A549 (cell line): ENCODE measurements at regions of chr9 and their contacts with region 1.

Region 1: GRCh38 chr9:136694236-136694942 is 7.1 kb upstream of the AGPAT2 start:
- DNase-seq: peak; percentile 75 to 90
- ATAC-seq: peak; percentile 73 to 87
- H3K4me3 ChIP-seq: peak overlapping the region; percentile 19; the same call in 2 of the 3 replicates
- H3K27ac ChIP-seq: peak overlapping the region; percentile 73 to 87
- H3K4me1 ChIP-seq: peaks cover 78% of the 10 kb centered on the region
- CTCF ChIP-seq: peak; percentile 90
- EP300 ChIP-seq: no peak
- POLR2A ChIP-seq: no peak
- RAD21 ChIP-seq: peak; percentile 87 to 92

Region 2: GRCh38 chr9:136644598-136645351 is 49.6 kb before region 1 on chr9:
- CTCF ChIA-PET with region 1: interaction called, 10 read pairs
- POLR2A ChIA-PET with region 1: no interaction called
- DNase-seq: peak in 1 of 2 experiments; percentile 88
- ATAC-seq: peak; percentile 83 to 96
- H3K4me3 ChIP-seq: peak overlapping the region; percentile 32; the same call in 2 of the 3 replicates
- H3K27ac ChIP-seq: peak overlapping the region; percentile 63 to 84; a peak in 5 of 6 replicates
- H3K4me1 ChIP-seq: peaks cover 12% of the 10 kb centered on the region
- CTCF ChIP-seq: peak; percentile 67
- EP300 ChIP-seq: no peak
- POLR2A ChIP-seq: no peak
- RAD21 ChIP-seq: peak; percentile 87 to 88

Region 3: DNA sequence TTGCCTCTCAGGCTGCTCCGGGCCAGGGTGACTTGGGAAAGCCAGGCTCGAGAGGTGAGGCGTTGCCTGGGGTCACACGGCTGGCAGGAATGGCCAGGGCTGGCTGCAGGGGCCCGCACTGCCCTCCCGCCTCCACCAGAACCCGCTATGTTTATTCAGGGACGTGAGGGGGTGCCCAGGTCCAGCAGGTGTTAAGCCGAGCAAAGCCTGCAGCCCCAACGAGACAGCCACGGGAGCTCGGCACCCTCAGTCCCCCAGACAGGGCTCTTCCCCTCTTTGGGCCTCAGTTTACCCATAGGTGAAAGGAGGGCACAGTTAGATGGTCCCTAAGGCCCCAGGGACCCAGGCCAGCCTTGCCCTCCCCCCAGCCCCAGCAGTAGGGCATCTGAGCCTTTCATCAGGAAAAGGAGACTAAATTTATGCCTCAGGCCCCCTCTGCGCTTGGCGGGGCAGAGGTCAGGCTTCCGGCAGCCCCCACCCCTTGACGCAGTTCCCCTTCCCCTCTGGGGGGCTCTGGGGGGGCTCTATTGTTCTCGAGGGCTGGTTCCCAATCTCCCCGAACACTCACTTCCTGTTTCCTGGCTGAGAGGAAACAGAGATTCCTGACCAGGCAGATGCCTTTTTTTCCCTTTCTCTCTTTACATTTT is 38.7 kb before region 1 on chr9:
- CTCF ChIA-PET with region 1: interaction called, 10 read pairs
- POLR2A ChIA-PET with region 1: no interaction called
- DNase-seq: no peak
- ATAC-seq: no peak
- H3K4me3 ChIP-seq: no peak overlapping the region
- H3K27ac ChIP-seq: peak overlapping the region in 1 of 2 experiments; percentile 62; a peak in 3 of 6 replicates
- H3K4me1 ChIP-seq: peaks cover 3% of the 10 kb centered on the region; the same call in 1 of the 3 replicates
- CTCF ChIP-seq: no peak
- EP300 ChIP-seq: no peak
- POLR2A ChIP-seq: no peak
- RAD21 ChIP-seq: no peak

Region 4: GRCh38 chr9:136665111-136665703 is 29.2 kb before region 1 on chr9:
- CTCF ChIA-PET with region 1: interaction called, 29 read pairs
- POLR2A ChIA-PET with region 1: interaction called, 3 read pairs
- DNase-seq: peak in 1 of 2 experiments; percentile 76
- ATAC-seq: peak; percentile 43 to 58; a peak in 5 of 6 replicates
- H3K4me3 ChIP-seq: peak overlapping the region; percentile 68
- H3K27ac ChIP-seq: peak overlapping the region; percentile 77 to 93
- H3K4me1 ChIP-seq: peaks cover 22% of the 10 kb centered on the region
- CTCF ChIP-seq: no peak
- EP300 ChIP-seq: no peak
- POLR2A ChIP-seq: no peak; the same call in 1 of the 2 replicates
- RAD21 ChIP-seq: no peak

Region 5: GRCh38 chr9:136671646-136672430 is 22.6 kb before region 1 on chr9:
- CTCF ChIA-PET with region 1: interaction called, 186 read pairs
- POLR2A ChIA-PET with region 1: interaction called, 6 read pairs
- DNase-seq: peak in 1 of 2 experiments; percentile 78
- ATAC-seq: peak in 1 of 2 experiments; percentile 63; a peak in 3 of 6 replicates
- H3K4me3 ChIP-seq: no peak overlapping the region
- H3K27ac ChIP-seq: peak overlapping the region in 1 of 2 experiments; percentile 47; a peak in 1 of 6 replicates
- H3K4me1 ChIP-seq: peaks cover 48% of the 10 kb centered on the region
- CTCF ChIP-seq: peak; percentile 66
- EP300 ChIP-seq: no peak
- POLR2A ChIP-seq: no peak
- RAD21 ChIP-seq: peak; percentile 27 to 31; a peak in 3 of 5 replicates

Region 6: GRCh38 chr9:136679431-136679941 is 14.9 kb before region 1 on chr9:
- CTCF ChIA-PET with region 1: interaction called, 186 read pairs
- POLR2A ChIA-PET with region 1: interaction called, 5 read pairs
- DNase-seq: no peak
- ATAC-seq: no peak
- H3K4me3 ChIP-seq: no peak overlapping the region
- H3K27ac ChIP-seq: no peak overlapping the region
- H3K4me1 ChIP-seq: peaks cover 16% of the 10 kb centered on the region
- CTCF ChIP-seq: no peak
- EP300 ChIP-seq: no peak
- POLR2A ChIP-seq: no peak
- RAD21 ChIP-seq: no peak

Region 7: GRCh38 chr9:136705564-136705963 is 11.2 kb after region 1 on chr9:
- CTCF ChIA-PET with region 1: interaction called, 54 read pairs
- POLR2A ChIA-PET with region 1: no interaction called
- DNase-seq: no peak
- ATAC-seq: peak in 1 of 2 experiments; percentile 41; a peak in 3 of 6 replicates
- H3K4me3 ChIP-seq: no peak overlapping the region
- H3K27ac ChIP-seq: no peak overlapping the region
- H3K4me1 ChIP-seq: peaks cover 2% of the 10 kb centered on the region; the same call in 1 of the 3 replicates
- CTCF ChIP-seq: no peak
- EP300 ChIP-seq: no peak
- POLR2A ChIP-seq: no peak
- RAD21 ChIP-seq: no peak